ENCODE measurements at regions of chrX and their contacts with region 1.

Region 1: GRCh38 chrX:119145241-119145653 is 17.6 kb upstream of the KIAA1210 start:
- DNase-seq: peak; percentile 62
- ATAC-seq: peak; percentile 76
- H3K4me3 ChIP-seq: no peak overlapping the region
- H3K27ac ChIP-seq: no peak overlapping the region
- H3K4me1 ChIP-seq: no peaks in the 10 kb centered on the region
- H3K27me3 ChIP-seq: no peaks in the 10 kb centered on the region
- CTCF ChIP-seq: peak; percentile 74

Region 2: GRCh38 chrX:119093991-119094737 is 51.1 kb before region 1 on chrX:
- CTCF ChIA-PET with region 1: no interaction called
- POLR2A ChIA-PET with region 1: no interaction called
- intact Hi-C with region 1: no loop called
- DNase-seq: peak; percentile 98
- ATAC-seq: peak; percentile 98
- H3K4me3 ChIP-seq: peak overlapping the region; percentile 39
- H3K27ac ChIP-seq: peak overlapping the region; percentile 97
- H3K4me1 ChIP-seq: peaks cover 35% of the 10 kb centered on the region
- H3K27me3 ChIP-seq: no peaks in the 10 kb centered on the region
- CTCF ChIP-seq: no peak

Region 3: DNA sequence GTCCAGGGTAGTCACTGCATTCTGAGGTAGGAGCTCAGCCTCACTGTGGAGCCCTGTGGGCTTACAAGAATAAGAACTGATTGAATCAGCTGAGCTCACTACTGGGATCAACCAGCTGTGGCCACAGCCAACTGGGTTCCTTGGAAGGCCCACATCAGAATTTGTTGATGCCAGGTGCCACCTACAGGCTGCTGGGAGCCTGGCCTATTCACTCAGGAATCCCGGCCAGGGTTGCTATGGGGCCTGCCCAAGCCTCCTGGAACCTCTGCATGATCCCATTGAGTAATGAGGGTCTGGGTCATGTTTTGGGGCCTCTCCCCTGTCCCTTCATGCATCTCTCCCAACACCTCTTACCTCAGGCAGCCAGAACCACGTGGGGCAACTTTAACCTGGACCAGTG is 36.2 kb after region 1 on chrX:
- CTCF ChIA-PET with region 1: no interaction called
- POLR2A ChIA-PET with region 1: no interaction called
- intact Hi-C with region 1: loop called (anchors 2 kb)
- DNase-seq: peak; percentile 70
- ATAC-seq: peak; percentile 97
- H3K4me3 ChIP-seq: no peak overlapping the region
- H3K27ac ChIP-seq: no peak overlapping the region
- H3K4me1 ChIP-seq: no peaks in the 10 kb centered on the region
- H3K27me3 ChIP-seq: no peaks in the 10 kb centered on the region
- CTCF ChIP-seq: peak; percentile 75

Region 4: DNA sequence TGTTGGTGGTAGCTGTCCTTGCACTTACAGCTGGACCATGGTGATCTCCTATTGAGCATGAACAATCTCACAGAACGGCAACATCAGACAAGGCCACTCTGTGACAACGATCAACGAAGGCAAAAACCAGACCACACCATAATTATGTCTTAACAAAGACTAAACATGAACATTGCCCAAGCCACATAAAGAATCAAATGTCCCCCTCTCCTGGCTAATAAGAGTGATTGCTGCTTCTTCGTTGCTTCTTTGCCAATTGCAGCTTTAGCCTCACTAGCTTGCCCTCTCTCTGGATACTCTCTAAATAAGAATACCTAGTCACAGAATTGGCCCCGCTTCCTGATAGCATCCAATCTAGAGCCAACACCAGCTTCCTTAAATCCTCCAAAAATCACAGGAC is 49.4 kb after region 1 on chrX:
- CTCF ChIA-PET with region 1: no interaction called
- POLR2A ChIA-PET with region 1: no interaction called
- intact Hi-C with region 1: loop called (anchors 1 kb)
- DNase-seq: peak; percentile 32
- ATAC-seq: no peak
- H3K4me3 ChIP-seq: no peak overlapping the region
- H3K27ac ChIP-seq: no peak overlapping the region
- H3K4me1 ChIP-seq: no peaks in the 10 kb centered on the region
- H3K27me3 ChIP-seq: 0 out of 2 replicates have a peak, but pooled peaks cover 5% of the 10 kb centered on the region
- CTCF ChIP-seq: peak; percentile 54

Region 5: GRCh38 chrX:119222932-119223331 is 77.7 kb after region 1 on chrX:
- CTCF ChIA-PET with region 1: no interaction called
- POLR2A ChIA-PET with region 1: no interaction called
- intact Hi-C with region 1: loop called (anchors 2 kb)
- DNase-seq: no peak
- ATAC-seq: no peak
- H3K4me3 ChIP-seq: no peak overlapping the region
- H3K27ac ChIP-seq: no peak overlapping the region
- H3K4me1 ChIP-seq: no peaks in the 10 kb centered on the region
- H3K27me3 ChIP-seq: no peaks in the 10 kb centered on the region
- CTCF ChIP-seq: no peak

Region 6: DNA sequence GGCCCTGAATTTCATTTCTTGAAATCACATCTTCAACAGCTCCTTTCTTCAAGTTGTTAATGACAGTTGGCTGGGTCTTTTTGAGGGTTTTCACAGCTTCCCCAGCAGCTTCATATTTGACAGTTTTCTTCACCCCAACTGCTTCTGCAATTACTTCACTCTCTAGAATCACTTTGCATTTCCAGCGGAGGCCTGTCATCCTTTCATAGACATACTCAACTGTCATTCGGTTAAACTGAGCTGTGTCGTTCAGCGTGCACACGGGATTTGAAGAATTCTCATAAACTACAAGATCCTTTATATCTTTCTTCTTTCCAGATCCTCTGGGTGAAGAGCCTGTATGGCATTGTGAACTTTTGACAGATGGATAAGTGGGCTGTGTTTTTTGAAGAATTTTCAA is 444.6 kb after region 1 on chrX:
- CTCF ChIA-PET with region 1: no interaction called
- POLR2A ChIA-PET with region 1: no interaction called
- intact Hi-C with region 1: no loop called
- DNase-seq: no peak
- ATAC-seq: no peak
- H3K4me3 ChIP-seq: no peak overlapping the region
- H3K27ac ChIP-seq: no peak overlapping the region
- H3K4me1 ChIP-seq: no peaks in the 10 kb centered on the region
- H3K27me3 ChIP-seq: no peaks in the 10 kb centered on the region
- CTCF ChIP-seq: no peak

Measured in PC-3 (cell line).